Naive thymus-derived CD4-positive, alpha-beta T cell (primary cell): ENCODE measurements at regions of chr4 and their contacts with region 1.

Region 1: DNA sequence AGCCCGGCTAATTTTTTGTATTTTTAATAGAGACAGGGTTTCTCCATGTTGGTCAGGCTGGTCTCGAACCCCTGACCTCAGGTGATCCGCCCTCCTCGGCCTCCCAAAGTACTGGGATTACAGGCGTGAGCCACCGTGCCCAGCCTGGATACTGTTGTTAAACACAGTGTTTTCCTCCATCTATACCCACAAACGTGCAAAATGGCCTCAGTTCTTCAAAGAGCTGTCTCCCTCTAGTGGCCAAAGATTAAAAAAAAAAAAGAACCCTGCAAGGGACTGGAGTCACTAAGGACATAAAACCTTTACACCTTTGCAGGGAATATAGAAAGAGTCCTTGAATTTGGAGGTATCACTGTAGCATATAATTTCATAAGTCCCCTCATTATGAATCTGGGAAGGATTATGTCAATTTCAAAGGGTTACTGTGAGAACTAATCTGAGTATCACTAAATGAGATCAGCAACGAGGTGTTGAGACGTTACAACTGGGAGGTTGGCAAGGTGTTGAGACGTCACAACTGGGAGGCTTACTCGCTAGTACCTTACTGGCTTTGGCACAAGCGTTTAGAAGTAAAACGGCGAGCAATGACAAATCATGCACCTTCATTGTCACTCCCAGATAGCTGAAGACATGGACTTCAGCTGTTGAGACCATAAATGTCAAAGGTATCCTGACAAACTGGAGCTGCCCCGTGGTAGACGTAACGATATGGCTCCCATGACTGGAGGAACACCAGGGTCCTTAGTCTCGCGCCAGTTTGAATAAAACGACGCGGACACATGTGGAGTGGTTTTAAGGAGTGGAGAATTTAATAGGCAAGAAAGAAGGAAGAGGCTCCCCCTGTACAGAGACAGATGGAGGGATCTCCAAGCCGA is 33.4 kb upstream of the ENPP6 start:
- DNase-seq: peak in 7 of 9 donors; percentile 26 to 67 (median 59)
- ATAC-seq: peak; percentile 82
- H3K4me3 ChIP-seq: no peak overlapping the region
- H3K4me3 Mint-ChIP-seq: no peak overlapping the region
- H3K27ac ChIP-seq: no peak overlapping the region
- H3K27ac Mint-ChIP-seq: peak overlapping the region in 4 of 9 donors; percentile 1 to 65 (median 14)
- H3K4me1 ChIP-seq: no peaks in the 10 kb centered on the region
- H3K4me1 Mint-ChIP-seq: peaks cover 0 to 14% (median 0%) of the 10 kb centered on the region in 7 donors
- H3K27me3 ChIP-seq: no peaks in the 10 kb centered on the region
- H3K27me3 Mint-ChIP-seq: peaks cover 0 to 4% (median 0%) of the 10 kb centered on the region in 5 donors

Region 2: DNA sequence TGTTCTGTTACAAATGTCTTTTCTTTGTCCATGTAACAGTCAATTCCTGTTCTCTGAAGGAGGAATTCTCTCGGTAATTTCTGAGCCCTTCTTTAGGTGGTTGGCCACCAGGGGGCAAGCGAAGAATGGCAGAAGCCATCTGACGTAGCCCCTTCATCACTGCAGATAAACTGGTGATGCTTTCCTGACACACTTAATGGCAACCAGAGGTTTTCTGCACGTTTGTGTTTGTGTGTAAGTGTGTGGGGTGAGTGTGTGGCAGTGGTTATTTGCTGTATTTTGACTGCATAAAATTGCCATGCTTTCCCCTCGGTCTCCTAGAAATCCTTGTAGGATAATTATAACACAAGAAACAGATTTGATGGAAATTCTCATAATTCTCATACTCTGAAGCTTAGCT is 410.7 kb before region 1 on chr4:
- CTCF ChIA-PET with region 1: interaction called, 4 read pairs
- POLR2A ChIA-PET with region 1: no interaction called
- intact Hi-C with region 1: loop called in 1 of 2 experiments (anchors 1 kb)
- DNase-seq: peak; percentile 27 to 62 (median 57)
- ATAC-seq: peak; percentile 70
- H3K4me3 ChIP-seq: no peak overlapping the region
- H3K4me3 Mint-ChIP-seq: no peak overlapping the region
- H3K27ac ChIP-seq: no peak overlapping the region
- H3K27ac Mint-ChIP-seq: no peak overlapping the region
- H3K4me1 ChIP-seq: no peaks in the 10 kb centered on the region
- H3K4me1 Mint-ChIP-seq: no peaks in the 10 kb centered on the region
- H3K27me3 ChIP-seq: no peaks in the 10 kb centered on the region
- H3K27me3 Mint-ChIP-seq: peaks cover 6 to 26% (median 20%) of the 10 kb centered on the region in 5 donors

Region 3: GRCh38 chr4:184168406-184169019 is 82.5 kb before region 1 on chr4:
- CTCF ChIA-PET with region 1: interaction called, 3 read pairs
- POLR2A ChIA-PET with region 1: no interaction called
- intact Hi-C with region 1: loop called (anchors 1 to 2 kb)
- DNase-seq: peak in 7 of 9 donors; percentile 15 to 77 (median 33)
- ATAC-seq: peak; percentile 89
- H3K4me3 ChIP-seq: no peak overlapping the region
- H3K4me3 Mint-ChIP-seq: peak overlapping the region in 2 of 10 donors; percentile 37 to 64
- H3K27ac ChIP-seq: no peak overlapping the region
- H3K27ac Mint-ChIP-seq: no peak overlapping the region
- H3K4me1 ChIP-seq: no peaks in the 10 kb centered on the region
- H3K4me1 Mint-ChIP-seq: peaks cover 0 to 20% (median 3%) of the 10 kb centered on the region in 7 donors
- H3K27me3 ChIP-seq: peaks cover 0 to 3% of the 10 kb centered on the region in 2 donors
- H3K27me3 Mint-ChIP-seq: peaks cover 55 to 76% (median 67%) of the 10 kb centered on the region in 5 donors

Region 4: GRCh38 chr4:184232206-184232820 is 18.7 kb before region 1 on chr4:
- CTCF ChIA-PET with region 1: no interaction called
- POLR2A ChIA-PET with region 1: no interaction called
- intact Hi-C with region 1: loop called (anchors 1 kb)
- DNase-seq: no peak
- ATAC-seq: no peak
- H3K4me3 ChIP-seq: no peak overlapping the region
- H3K4me3 Mint-ChIP-seq: no peak overlapping the region
- H3K27ac ChIP-seq: no peak overlapping the region
- H3K27ac Mint-ChIP-seq: peak overlapping the region in 4 of 9 donors; percentile 1 to 42 (median 26)
- H3K4me1 ChIP-seq: peaks cover 15 to 19% of the 10 kb centered on the region in 2 donors
- H3K4me1 Mint-ChIP-seq: peaks cover 16 to 78% (median 30%) of the 10 kb centered on the region in 7 donors
- H3K27me3 ChIP-seq: no peaks in the 10 kb centered on the region
- H3K27me3 Mint-ChIP-seq: peaks cover 0 to 11% (median 0%) of the 10 kb centered on the region in 5 donors

Region 5: GRCh38 chr4:184237612-184238011 is 13.4 kb before region 1 on chr4:
- CTCF ChIA-PET with region 1: interaction called, 3 read pairs
- POLR2A ChIA-PET with region 1: no interaction called
- intact Hi-C with region 1: loop called in 1 of 2 experiments (anchors 1 kb)
- DNase-seq: peak in 1 of 9 donors; percentile 31
- ATAC-seq: peak; percentile 45
- H3K4me3 ChIP-seq: no peak overlapping the region
- H3K4me3 Mint-ChIP-seq: peak overlapping the region in 1 of 10 donors; percentile 80
- H3K27ac ChIP-seq: no peak overlapping the region
- H3K27ac Mint-ChIP-seq: peak overlapping the region in 4 of 9 donors; percentile 19 to 93 (median 27)
- H3K4me1 ChIP-seq: no peaks in the 10 kb centered on the region
- H3K4me1 Mint-ChIP-seq: peaks cover 0 to 51% (median 8%) of the 10 kb centered on the region in 7 donors
- H3K27me3 ChIP-seq: no peaks in the 10 kb centered on the region
- H3K27me3 Mint-ChIP-seq: no peaks in the 10 kb centered on the region

Region 6: GRCh38 chr4:184273166-184274147 is 22.4 kb after region 1 on chr4:
- CTCF ChIA-PET with region 1: no interaction called
- POLR2A ChIA-PET with region 1: no interaction called
- intact Hi-C with region 1: no loop called
- DNase-seq: peak in 1 of 9 donors; percentile 21
- ATAC-seq: no peak
- H3K4me3 ChIP-seq: no peak overlapping the region
- H3K4me3 Mint-ChIP-seq: no peak overlapping the region
- H3K27ac ChIP-seq: no peak overlapping the region
- H3K27ac Mint-ChIP-seq: peak overlapping the region in 1 of 9 donors; percentile 47
- H3K4me1 ChIP-seq: peaks cover 0 to 6% of the 10 kb centered on the region in 2 donors
- H3K4me1 Mint-ChIP-seq: peaks cover 3 to 45% (median 8%) of the 10 kb centered on the region in 7 donors
- H3K27me3 ChIP-seq: no peaks in the 10 kb centered on the region
- H3K27me3 Mint-ChIP-seq: no peaks in the 10 kb centered on the region

Region 7: GRCh38 chr4:184896868-184897715 is 646.1 kb after region 1 on chr4:
- CTCF ChIA-PET with region 1: no interaction called
- POLR2A ChIA-PET with region 1: no interaction called
- intact Hi-C with region 1: no loop called
- DNase-seq: no peak
- ATAC-seq: peak; percentile 82
- H3K4me3 ChIP-seq: no peak overlapping the region
- H3K4me3 Mint-ChIP-seq: no peak overlapping the region
- H3K27ac ChIP-seq: no peak overlapping the region
- H3K27ac Mint-ChIP-seq: no peak overlapping the region
- H3K4me1 ChIP-seq: no peaks in the 10 kb centered on the region
- H3K4me1 Mint-ChIP-seq: peaks cover 0 to 8% (median 0%) of the 10 kb centered on the region in 7 donors
- H3K27me3 ChIP-seq: no peaks in the 10 kb centered on the region
- H3K27me3 Mint-ChIP-seq: peaks cover 6 to 28% (median 21%) of the 10 kb centered on the region in 5 donors